Right ventricle myocardium inferior (tissue), 1 donor: ENCODE measurements at regions of chr17 and their contacts with region 1.

Region 1: DNA sequence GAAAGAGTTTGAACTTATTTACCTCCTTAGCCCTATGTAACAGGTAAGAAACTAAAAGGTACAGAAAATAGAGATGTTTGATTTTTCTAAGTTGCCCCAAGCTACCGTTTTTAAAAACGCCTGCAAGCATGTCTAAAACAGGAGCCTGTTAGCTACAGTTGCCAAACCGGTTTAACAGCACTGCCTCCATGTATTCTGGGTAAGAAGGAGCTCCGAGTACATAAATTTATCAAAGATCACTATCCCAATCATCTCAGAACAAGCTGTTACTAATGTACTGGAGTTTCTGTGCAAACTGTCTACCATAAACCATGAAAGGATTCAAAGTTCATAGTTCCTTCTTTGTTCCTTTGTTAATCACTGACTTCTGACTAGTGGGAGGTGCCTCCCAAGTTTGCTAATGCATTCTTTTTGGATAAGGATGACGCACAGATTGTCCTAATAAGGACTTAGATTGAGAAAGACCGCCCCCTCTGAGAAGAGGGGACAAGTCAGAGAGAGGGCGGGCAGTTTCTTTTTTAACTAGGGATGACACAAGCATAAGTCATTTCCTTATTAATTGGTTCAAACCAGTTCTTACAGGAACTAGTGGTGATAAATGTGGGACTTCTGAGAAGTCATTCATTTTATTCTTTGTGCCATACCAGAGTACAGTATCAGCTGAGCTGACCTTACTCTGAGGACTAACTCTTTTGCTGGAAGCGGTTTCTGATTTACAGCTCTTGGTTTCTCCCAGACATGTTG is 55.3 kb downstream of the TUBD1 start:
- DNase-seq: no peak
- ATAC-seq: peak; percentile 88

Region 2: GRCh38 chr17:59756236-59756851 is 81.1 kb before region 1 on chr17:
- intact Hi-C with region 1: loop called (anchors 5 kb)
- DNase-seq: no peak
- ATAC-seq: no peak